ENCODE measurements at regions of chr5 and their contacts with region 1.

Region 1: GRCh38 chr5:124402144-124402581 is 344.3 kb downstream of the ZNF608 start:
- DNase-seq: peak; percentile 92
- H3K4me3 ChIP-seq: no peak overlapping the region
- H3K27ac ChIP-seq: peak overlapping the region; percentile 83
- H3K4me1 ChIP-seq: peaks cover 6% of the 10 kb centered on the region
- H3K27me3 ChIP-seq: no peaks in the 10 kb centered on the region
- CTCF ChIP-seq: no peak

Region 2: GRCh38 chr5:124461941-124462340 is 59.8 kb after region 1 on chr5:
- CTCF ChIA-PET with region 1: no interaction called
- dilution Hi-C with region 1: no loop called
- in situ Hi-C with region 1: no loop called
- intact Hi-C with region 1: no loop called
- DNase-seq: no peak
- H3K4me3 ChIP-seq: no peak overlapping the region
- H3K27ac ChIP-seq: no peak overlapping the region
- H3K4me1 ChIP-seq: no peaks in the 10 kb centered on the region
- H3K27me3 ChIP-seq: no peaks in the 10 kb centered on the region
- CTCF ChIP-seq: no peak

Region 3: GRCh38 chr5:125477586-125477975 is 1075.4 kb after region 1 on chr5:
- CTCF ChIA-PET with region 1: interaction called, 13 read pairs
- dilution Hi-C with region 1: no loop called
- in situ Hi-C with region 1: no loop called
- intact Hi-C with region 1: no loop called
- DNase-seq: no peak
- H3K4me3 ChIP-seq: no peak overlapping the region
- H3K27ac ChIP-seq: no peak overlapping the region
- H3K4me1 ChIP-seq: peaks cover 16% of the 10 kb centered on the region
- H3K27me3 ChIP-seq: no peaks in the 10 kb centered on the region
- CTCF ChIP-seq: no peak

Measured in mammary epithelial cell (primary cell).